PC-9 (cell line): ENCODE measurements at regions of chr12 and their contacts with region 1.

Region 1: DNA sequence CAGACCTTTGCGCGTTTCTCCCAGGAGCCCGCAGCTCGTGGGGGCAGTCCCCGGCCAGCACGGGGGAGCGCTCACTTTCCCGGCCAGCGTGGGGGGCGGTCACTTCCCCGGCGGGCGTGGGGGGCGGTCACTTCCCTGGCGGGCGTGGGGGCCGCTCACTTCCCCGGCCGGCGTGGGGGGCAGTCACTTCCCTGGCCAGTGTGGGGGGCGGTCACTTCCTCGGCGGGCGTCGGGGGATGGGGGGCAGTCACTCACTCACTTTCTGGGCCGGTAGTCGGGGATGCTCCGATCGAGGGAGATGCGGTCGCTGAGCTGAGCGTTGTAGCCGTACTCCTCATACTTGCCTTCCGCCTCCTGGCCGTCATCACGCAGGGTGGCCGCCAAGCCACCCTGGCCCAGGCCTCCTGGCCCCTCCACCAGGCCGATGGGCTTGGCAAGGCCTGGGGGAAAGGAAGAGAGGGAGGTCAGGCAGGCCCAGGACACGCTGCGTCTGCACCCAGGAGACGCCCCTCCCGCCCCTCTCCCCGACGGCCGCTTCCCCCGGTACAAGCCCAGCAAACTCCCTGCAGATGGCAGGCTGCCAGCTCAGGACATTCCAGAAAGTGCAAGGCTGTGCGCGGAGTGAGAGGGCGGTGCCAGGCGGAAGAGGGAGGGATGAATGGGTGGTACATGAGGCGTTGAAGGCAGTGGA is 43.3 kb downstream of the GALNT9 start:
- DNase-seq: peak in 1 of 2 experiments; percentile 78
- H3K4me3 ChIP-seq: no peak overlapping the region
- H3K27ac ChIP-seq: no peak overlapping the region
- H3K4me1 ChIP-seq: peaks cover 28% of the 10 kb centered on the region
- H3K27me3 ChIP-seq: peaks cover 14% of the 10 kb centered on the region; the same call in 1 of the 2 replicates
- CTCF ChIP-seq: no peak

Region 2: DNA sequence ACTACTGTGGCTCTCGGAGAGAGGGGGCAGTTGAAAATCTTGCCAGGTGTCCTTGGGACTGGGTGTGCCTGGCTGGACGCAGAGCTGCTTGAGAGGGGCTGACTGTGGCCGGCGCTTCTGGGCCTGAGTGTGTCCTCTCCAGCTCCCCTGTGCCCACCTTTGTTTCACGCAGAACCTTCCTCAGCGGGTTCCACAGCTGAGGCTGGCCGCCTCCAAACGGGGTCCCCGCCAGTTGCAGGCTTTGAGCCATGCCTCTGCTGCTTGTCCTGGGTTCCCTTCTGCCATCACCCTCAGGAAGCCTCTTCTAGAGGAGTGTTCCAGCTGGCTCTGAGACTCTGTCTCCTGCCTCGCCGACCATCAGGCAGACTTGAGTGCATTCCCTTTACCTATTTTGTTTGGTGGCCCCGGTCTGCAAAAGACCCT is 191.7 kb before region 1 on chr12:
- CTCF ChIA-PET with region 1: no interaction called
- POLR2A ChIA-PET with region 1: no interaction called
- intact Hi-C with region 1: no loop called
- DNase-seq: no peak
- H3K4me3 ChIP-seq: no peak overlapping the region
- H3K27ac ChIP-seq: no peak overlapping the region
- H3K4me1 ChIP-seq: no peaks in the 10 kb centered on the region
- H3K27me3 ChIP-seq: no peaks in the 10 kb centered on the region
- CTCF ChIP-seq: no peak

Region 3: GRCh38 chr12:132161036-132161781 is 124.9 kb before region 1 on chr12:
- CTCF ChIA-PET with region 1: interaction called, 20 read pairs
- POLR2A ChIA-PET with region 1: no interaction called
- intact Hi-C with region 1: no loop called
- DNase-seq: no peak
- H3K4me3 ChIP-seq: no peak overlapping the region
- H3K27ac ChIP-seq: no peak overlapping the region
- H3K4me1 ChIP-seq: no peaks in the 10 kb centered on the region
- H3K27me3 ChIP-seq: no peaks in the 10 kb centered on the region
- CTCF ChIP-seq: no peak

Region 4: GRCh38 chr12:132222096-132222807 is 63.9 kb before region 1 on chr12:
- CTCF ChIA-PET with region 1: no interaction called
- POLR2A ChIA-PET with region 1: no interaction called
- intact Hi-C with region 1: loop called (anchors 5 kb)
- DNase-seq: peak; percentile 50 to 67
- H3K4me3 ChIP-seq: no peak overlapping the region
- H3K27ac ChIP-seq: no peak overlapping the region
- H3K4me1 ChIP-seq: no peaks in the 10 kb centered on the region
- H3K27me3 ChIP-seq: peaks cover 40% of the 10 kb centered on the region
- CTCF ChIP-seq: no peak

Region 5: GRCh38 chr12:132333766-132334165 is 47.6 kb after region 1 on chr12:
- CTCF ChIA-PET with region 1: no interaction called
- POLR2A ChIA-PET with region 1: interaction called, 6 read pairs
- intact Hi-C with region 1: loop called (anchors 1 kb)
- DNase-seq: no peak
- H3K4me3 ChIP-seq: no peak overlapping the region
- H3K27ac ChIP-seq: no peak overlapping the region
- H3K4me1 ChIP-seq: no peaks in the 10 kb centered on the region
- H3K27me3 ChIP-seq: peaks cover 85% of the 10 kb centered on the region
- CTCF ChIP-seq: no peak

Region 6: GRCh38 chr12:132393991-132394949 is 108.1 kb after region 1 on chr12:
- CTCF ChIA-PET with region 1: no interaction called
- POLR2A ChIA-PET with region 1: interaction called, 5 read pairs
- intact Hi-C with region 1: loop called (anchors 5 kb)
- DNase-seq: peak in 1 of 2 experiments; percentile 35
- H3K4me3 ChIP-seq: no peak overlapping the region
- H3K27ac ChIP-seq: no peak overlapping the region
- H3K4me1 ChIP-seq: no peaks in the 10 kb centered on the region
- H3K27me3 ChIP-seq: peaks cover 63% of the 10 kb centered on the region
- CTCF ChIP-seq: no peak

Region 7: GRCh38 chr12:132445884-132446632 is 159.9 kb after region 1 on chr12:
- CTCF ChIA-PET with region 1: no interaction called
- POLR2A ChIA-PET with region 1: interaction called, 15 read pairs
- intact Hi-C with region 1: no loop called
- DNase-seq: peak; percentile 87 to 89
- H3K4me3 ChIP-seq: peak overlapping the region; percentile 69
- H3K27ac ChIP-seq: peak overlapping the region; percentile 48
- H3K4me1 ChIP-seq: peaks cover 4% of the 10 kb centered on the region; the same call in 1 of the 2 replicates
- H3K27me3 ChIP-seq: peaks cover 45% of the 10 kb centered on the region
- CTCF ChIP-seq: no peak